Sigmoid colon (tissue), 7 donors: ENCODE measurements at regions of chr1 and their contacts with region 1.

Region 1: GRCh38 chr1:17419626-17420328 is 19.7 kb downstream of the RCC2 start:
- DNase-seq: peak; percentile 83
- H3K4me3 ChIP-seq: no peak overlapping the region
- H3K27ac ChIP-seq: peak overlapping the region in 2 of 4 donors; percentile 30 to 45
- H3K4me1 ChIP-seq: peaks cover 0 to 35% (median 26%) of the 10 kb centered on the region in 4 donors
- H3K27me3 ChIP-seq: no peaks in the 10 kb centered on the region
- CTCF ChIP-seq: peak; percentile 96 to 99 (median 98)
- EP300 ChIP-seq: no peak
- POLR2A ChIP-seq: no peak

Region 2: GRCh38 chr1:17439250-17440073 is 19.7 kb after region 1 on chr1 and contains the start of gene RCC2:
- intact Hi-C with region 1: loop called (anchors 1 kb)
- DNase-seq: peak; percentile 81
- H3K4me3 ChIP-seq: peak within 1 kb of the TSS; percentile 60 to 77 (median 66)
- H3K27ac ChIP-seq: peak within 1 kb of the TSS; percentile 80 to 94 (median 88)
- H3K4me1 ChIP-seq: peaks cover 0 to 39% (median 29%) of the 10 kb centered on the region in 4 donors
- H3K27me3 ChIP-seq: no peaks in the 10 kb centered on the region
- CTCF ChIP-seq: no peak
- EP300 ChIP-seq: no peak
- POLR2A ChIP-seq: no peak
- total RNA-seq, gene RCC2: 12.8 to 21.9 (median 17.8) TPM

Region 3: DNA sequence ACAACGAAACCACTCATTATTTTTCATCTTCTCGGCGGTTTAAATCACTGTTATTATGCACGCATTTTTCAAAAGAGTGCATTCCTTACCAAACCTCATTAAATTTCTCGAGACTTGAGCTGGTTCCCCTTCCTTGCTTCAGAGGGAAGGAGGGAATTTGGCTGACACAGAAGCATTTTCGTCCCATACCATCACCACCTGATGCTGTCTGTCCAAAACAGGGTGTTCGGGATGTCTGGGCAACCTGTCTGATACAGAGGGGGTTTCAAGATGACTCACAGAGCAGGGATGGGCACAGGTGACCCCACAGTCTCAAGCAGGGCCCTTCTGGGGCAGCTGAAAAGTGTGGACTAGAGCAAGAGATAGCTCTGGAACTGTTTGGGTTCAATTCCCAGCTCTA is 32.0 kb after region 1 on chr1:
- intact Hi-C with region 1: loop called (anchors 5 kb)
- DNase-seq: no peak
- H3K4me3 ChIP-seq: no peak overlapping the region
- H3K27ac ChIP-seq: no peak overlapping the region
- H3K4me1 ChIP-seq: no peaks in the 10 kb centered on the region
- H3K27me3 ChIP-seq: no peaks in the 10 kb centered on the region
- CTCF ChIP-seq: no peak
- EP300 ChIP-seq: no peak
- POLR2A ChIP-seq: no peak

Region 4: GRCh38 chr1:17465228-17465627 is 45.5 kb after region 1 on chr1:
- intact Hi-C with region 1: no loop called
- DNase-seq: no peak
- H3K4me3 ChIP-seq: no peak overlapping the region
- H3K27ac ChIP-seq: no peak overlapping the region
- H3K4me1 ChIP-seq: no peaks in the 10 kb centered on the region
- H3K27me3 ChIP-seq: peaks cover 0 to 10% (median 0%) of the 10 kb centered on the region in 3 donors
- CTCF ChIP-seq: no peak
- EP300 ChIP-seq: no peak
- POLR2A ChIP-seq: no peak

Region 5: DNA sequence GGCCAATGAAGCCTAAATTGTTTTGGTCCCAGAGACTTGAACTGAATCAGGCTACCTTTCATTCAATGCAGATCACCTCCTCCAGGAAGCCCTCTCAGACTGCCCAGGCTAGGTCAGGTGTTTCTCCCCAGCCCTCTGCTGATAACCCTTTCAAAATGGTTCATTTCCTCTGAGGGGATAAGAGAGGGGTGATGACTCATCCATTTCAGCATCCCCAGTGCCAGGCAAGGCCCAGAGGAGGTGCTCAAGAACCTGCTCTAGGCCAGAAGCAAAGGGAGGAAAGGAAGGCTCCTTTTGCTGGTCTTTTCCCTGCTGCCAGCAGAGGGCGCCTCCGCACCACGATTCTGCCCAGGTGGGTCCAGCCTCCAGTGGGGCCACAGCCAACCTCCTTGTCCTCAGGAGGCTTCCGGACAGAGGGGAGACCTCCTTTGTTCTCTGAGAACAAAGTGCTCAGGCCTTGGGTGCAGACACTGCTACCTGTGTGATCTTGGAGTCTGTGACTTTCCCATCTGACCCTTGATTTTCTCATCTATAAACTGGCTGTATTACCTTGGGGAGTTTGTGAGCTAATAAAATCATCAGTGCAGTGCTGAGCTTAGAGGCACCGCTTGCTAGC is 74.4 kb after region 1 on chr1:
- intact Hi-C with region 1: loop called (anchors 5 kb)
- DNase-seq: peak; percentile 83
- H3K4me3 ChIP-seq: no peak overlapping the region
- H3K27ac ChIP-seq: no peak overlapping the region
- H3K4me1 ChIP-seq: peaks cover 0 to 2% (median under 1%) of the 10 kb centered on the region in 4 donors
- H3K27me3 ChIP-seq: no peaks in the 10 kb centered on the region
- CTCF ChIP-seq: peak; percentile 70 to 86 (median 78)
- EP300 ChIP-seq: no peak
- POLR2A ChIP-seq: no peak

Region 6: DNA sequence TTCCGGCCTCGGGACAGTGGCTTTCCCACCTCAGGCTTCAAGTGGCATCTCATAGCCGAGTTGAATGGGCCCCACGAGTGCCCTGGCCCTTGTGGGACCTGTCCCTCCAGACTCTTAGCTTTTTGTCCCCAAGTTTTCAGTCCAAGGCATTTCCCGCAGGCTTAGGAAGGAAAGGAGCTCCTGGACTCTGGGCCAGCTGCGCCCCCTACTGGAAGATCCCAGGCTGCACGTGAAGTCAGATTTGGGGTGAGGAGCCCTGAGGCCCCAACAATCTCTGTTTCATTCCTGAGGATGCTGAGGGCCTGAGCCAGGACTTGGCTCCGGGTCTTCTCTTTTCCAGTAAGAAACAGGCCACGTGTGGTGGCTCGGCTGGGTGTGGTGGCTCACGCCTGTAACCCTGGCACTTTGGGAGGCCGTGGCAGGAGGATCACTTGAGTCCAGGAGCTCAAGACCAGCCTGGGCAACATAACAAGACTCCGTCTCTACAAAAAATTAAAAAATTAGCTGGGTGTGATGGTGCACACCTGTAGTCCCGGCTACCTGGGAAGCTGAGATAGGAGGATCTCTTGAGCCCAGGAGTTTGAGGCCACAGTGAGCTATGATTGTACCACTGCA is 187.2 kb after region 1 on chr1:
- intact Hi-C with region 1: loop called (anchors 5 kb)
- DNase-seq: peak; percentile 89
- H3K4me3 ChIP-seq: no peak overlapping the region
- H3K27ac ChIP-seq: peak overlapping the region; percentile 46 to 77 (median 68)
- H3K4me1 ChIP-seq: peaks cover 0 to 34% (median 20%) of the 10 kb centered on the region in 4 donors
- H3K27me3 ChIP-seq: no peaks in the 10 kb centered on the region
- CTCF ChIP-seq: peak; percentile 92 to 95 (median 93)
- EP300 ChIP-seq: no peak
- POLR2A ChIP-seq: no peak

Region 7: DNA sequence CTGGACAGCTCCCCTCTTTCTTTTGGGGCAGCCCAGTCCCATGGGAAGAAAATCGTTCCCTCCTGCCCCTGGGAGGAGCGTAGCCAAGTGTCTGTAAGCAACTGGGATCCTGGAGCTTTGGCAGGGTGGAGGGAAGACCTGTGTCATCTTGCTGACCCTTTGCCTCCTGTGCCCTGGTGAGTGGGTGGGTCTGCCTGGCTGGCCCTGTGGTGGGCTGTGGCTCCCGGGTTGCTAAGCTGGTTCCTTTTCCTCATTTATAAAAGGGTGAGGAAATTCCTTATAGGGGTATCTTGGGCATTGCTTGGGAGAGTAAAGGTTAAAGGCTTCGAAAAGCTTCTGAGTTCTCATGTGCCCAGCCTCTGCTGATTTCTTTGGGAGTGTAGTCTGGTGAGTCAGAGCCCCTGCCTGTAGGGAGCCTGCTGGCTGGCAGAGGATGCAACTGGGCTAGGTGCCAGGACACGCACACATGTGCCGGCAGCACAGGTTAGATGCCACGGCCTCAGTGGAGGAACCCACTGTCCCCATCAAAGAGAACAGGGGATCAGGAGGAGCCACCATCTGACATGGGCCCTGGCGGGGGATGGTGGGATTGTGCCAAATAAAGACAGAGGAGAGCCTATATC is 204.9 kb after region 1 on chr1:
- intact Hi-C with region 1: loop called (anchors 5 kb)
- DNase-seq: peak; percentile 83
- H3K4me3 ChIP-seq: no peak overlapping the region
- H3K27ac ChIP-seq: peak overlapping the region; percentile 43 to 81 (median 74)
- H3K4me1 ChIP-seq: peaks cover 0 to 34% (median 25%) of the 10 kb centered on the region in 4 donors
- H3K27me3 ChIP-seq: no peaks in the 10 kb centered on the region
- CTCF ChIP-seq: no peak
- EP300 ChIP-seq: peak in 1 of 4 donors; percentile 47
- POLR2A ChIP-seq: no peak